ENCODE measurements at regions of chr3 and their contacts with region 1.

Region 1: GRCh38 chr3:71087143-71088018 is 496.1 kb downstream of the FOXP1 start:
- DNase-seq: peak; percentile 83 to 93 (median 90)
- H3K4me3 ChIP-seq: peak overlapping the region in 1 of 2 donors; percentile 36
- H3K4me3 Mint-ChIP-seq: peak overlapping the region; percentile 65 to 91 (median 77)
- H3K27ac ChIP-seq: peak overlapping the region; percentile 59
- H3K27ac Mint-ChIP-seq: peak overlapping the region; percentile 88 to 98 (median 96)
- H3K4me1 ChIP-seq: peaks cover 89% of the 10 kb centered on the region
- H3K4me1 Mint-ChIP-seq: peaks cover 64 to 87% (median 77%) of the 10 kb centered on the region in 4 donors
- H3K27me3 ChIP-seq: no peaks in the 10 kb centered on the region
- H3K27me3 Mint-ChIP-seq: no peaks in the 10 kb centered on the region

Region 2: GRCh38 chr3:71076361-71077002 is 10.9 kb before region 1 on chr3:
- CTCF ChIA-PET with region 1: interaction called, 18 read pairs
- POLR2A ChIA-PET with region 1: interaction called, 13 read pairs
- intact Hi-C with region 1: loop called (anchors 1 kb)
- DNase-seq: no peak
- H3K4me3 ChIP-seq: no peak overlapping the region
- H3K4me3 Mint-ChIP-seq: peak overlapping the region in 2 of 8 donors; percentile 37 to 40
- H3K27ac ChIP-seq: no peak overlapping the region
- H3K27ac Mint-ChIP-seq: peak overlapping the region; percentile 36 to 93 (median 84)
- H3K4me1 ChIP-seq: peaks cover 74% of the 10 kb centered on the region
- H3K4me1 Mint-ChIP-seq: peaks cover 67 to 87% (median 77%) of the 10 kb centered on the region in 4 donors
- H3K27me3 ChIP-seq: no peaks in the 10 kb centered on the region
- H3K27me3 Mint-ChIP-seq: no peaks in the 10 kb centered on the region

Region 3: GRCh38 chr3:71201939-71202338 is 114.6 kb after region 1 on chr3:
- CTCF ChIA-PET with region 1: no interaction called
- POLR2A ChIA-PET with region 1: no interaction called
- intact Hi-C with region 1: no loop called
- DNase-seq: no peak
- H3K4me3 ChIP-seq: no peak overlapping the region
- H3K4me3 Mint-ChIP-seq: no peak overlapping the region
- H3K27ac ChIP-seq: no peak overlapping the region
- H3K27ac Mint-ChIP-seq: peak overlapping the region in 1 of 7 donors; percentile 62
- H3K4me1 ChIP-seq: no peaks in the 10 kb centered on the region
- H3K4me1 Mint-ChIP-seq: peaks cover 25 to 38% (median 30%) of the 10 kb centered on the region in 4 donors
- H3K27me3 ChIP-seq: no peaks in the 10 kb centered on the region
- H3K27me3 Mint-ChIP-seq: no peaks in the 10 kb centered on the region